ENCODE measurements at regions of chr7 and their contacts with region 1.

Region 1: DNA sequence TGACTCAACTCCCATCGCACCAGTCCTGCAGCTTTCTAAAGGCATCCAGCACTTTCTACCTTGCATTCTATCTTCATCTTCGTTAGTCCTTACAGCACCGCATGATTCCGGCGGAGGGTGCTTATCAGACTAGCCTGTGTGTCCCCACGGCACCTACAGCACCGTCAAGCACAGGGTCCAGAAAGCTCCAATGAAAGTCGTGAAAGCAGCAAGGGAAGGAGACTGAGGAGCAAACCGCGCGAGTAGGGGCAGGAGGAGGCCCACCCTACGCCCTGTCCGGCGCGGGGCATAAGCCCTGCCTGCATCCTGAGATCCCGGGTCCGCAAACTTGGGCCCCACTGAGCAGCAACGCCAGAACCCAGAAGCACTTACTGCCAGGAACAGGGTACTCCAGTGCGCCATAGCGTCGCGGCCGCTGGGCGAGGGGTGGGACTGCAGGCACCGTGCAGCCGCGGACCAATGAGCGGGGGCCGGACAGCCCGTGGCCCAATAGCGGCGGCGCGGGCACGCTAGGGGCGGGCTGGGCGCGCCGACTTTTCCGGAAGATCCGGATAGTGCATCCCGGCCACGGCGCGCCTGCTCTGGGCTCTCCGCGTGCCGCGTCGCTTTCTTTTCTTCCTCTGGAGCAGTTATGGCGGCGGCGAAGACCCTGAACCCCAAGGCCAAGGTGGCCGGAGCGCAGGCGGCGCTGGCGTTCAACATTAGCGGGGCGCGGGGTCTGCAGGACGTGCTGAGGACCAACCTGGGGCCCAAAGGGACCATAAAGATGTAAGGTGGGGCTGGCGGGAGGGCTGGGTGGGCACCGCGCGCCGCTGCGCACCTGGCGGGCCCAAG is 122.1 kb upstream of the VKORC1L1 start:
- DNase-seq: peak; percentile 92
- H3K4me3 Mint-ChIP-seq: peak overlapping the region; percentile 92
- H3K27ac Mint-ChIP-seq: peak overlapping the region; percentile 81
- H3K4me1 Mint-ChIP-seq: peaks cover 37% of the 10 kb centered on the region
- H3K27me3 Mint-ChIP-seq: no peaks in the 10 kb centered on the region

Region 2: DNA sequence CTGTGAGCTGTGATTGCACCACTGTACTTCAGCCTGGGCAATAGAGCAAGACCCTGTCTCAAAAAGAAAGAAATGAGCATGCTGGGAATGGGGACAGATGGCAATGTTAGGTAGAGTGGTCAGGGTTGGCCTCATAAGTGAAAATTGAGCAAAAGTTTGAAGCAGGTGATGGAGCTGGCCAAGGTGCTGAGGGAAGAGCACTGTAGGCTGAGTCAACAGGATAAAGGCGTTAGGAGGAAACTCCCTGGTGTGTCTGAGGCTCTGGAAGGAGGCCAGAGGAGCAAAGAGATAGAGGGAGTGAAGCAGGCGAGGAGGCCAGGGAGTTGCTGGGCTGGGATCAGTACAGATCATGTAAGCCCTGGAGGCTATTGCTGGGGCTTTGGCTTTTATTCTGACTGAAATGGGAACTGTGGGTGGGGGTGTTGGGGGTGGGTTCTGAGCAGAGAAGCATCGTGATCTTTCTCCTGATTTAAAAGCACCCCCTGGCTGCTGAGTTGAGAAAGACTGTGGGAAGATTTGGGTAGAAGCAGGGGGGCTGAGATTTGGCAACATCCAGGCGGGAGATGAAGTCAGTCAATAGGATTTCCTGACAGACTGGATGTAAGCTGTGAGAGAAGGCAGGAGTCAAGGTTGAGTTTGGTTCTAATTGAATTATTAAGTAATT is 69.7 kb after region 1 on chr7:
- CTCF ChIA-PET with region 1: no interaction called
- POLR2A ChIA-PET with region 1: no interaction called
- DNase-seq: no peak
- H3K4me3 Mint-ChIP-seq: no peak overlapping the region
- H3K27ac Mint-ChIP-seq: no peak overlapping the region
- H3K4me1 Mint-ChIP-seq: no peaks in the 10 kb centered on the region
- H3K27me3 Mint-ChIP-seq: no peaks in the 10 kb centered on the region

Region 3: GRCh38 chr7:65981965-65982792 is 231.5 kb after region 1 on chr7 and contains the start of gene GUSB:
- CTCF ChIA-PET with region 1: interaction called, 5 read pairs
- POLR2A ChIA-PET with region 1: interaction called, 20 read pairs
- DNase-seq: peak; percentile 91
- H3K4me3 Mint-ChIP-seq: peak within 1 kb of the TSS; percentile 91
- H3K27ac Mint-ChIP-seq: peak within 1 kb of the TSS; percentile 96
- H3K4me1 Mint-ChIP-seq: peaks cover 19% of the 10 kb centered on the region
- H3K27me3 Mint-ChIP-seq: no peaks in the 10 kb centered on the region
- total RNA-seq, gene GUSB: 74.0 to 82.3 TPM

Region 4: GRCh38 chr7:66013916-66014315 is 263.2 kb after region 1 on chr7:
- CTCF ChIA-PET with region 1: no interaction called
- POLR2A ChIA-PET with region 1: no interaction called
- DNase-seq: no peak
- H3K4me3 Mint-ChIP-seq: no peak overlapping the region
- H3K27ac Mint-ChIP-seq: no peak overlapping the region
- H3K4me1 Mint-ChIP-seq: no peaks in the 10 kb centered on the region
- H3K27me3 Mint-ChIP-seq: peaks cover 4% of the 10 kb centered on the region